ENCODE measurements at regions of chr18 and their contacts with region 1.

Region 1: GRCh38 chr18:9575558-9575957 is 38.8 kb downstream of the PPP4R1 start:
- DNase-seq: peak in 4 of 5 donors; percentile 80 to 88 (median 82)
- ATAC-seq: peak; percentile 96 to 99 (median 98)
- H3K4me3 ChIP-seq: peak overlapping the region in 1 of 12 donors; percentile 6
- H3K27ac ChIP-seq: peak overlapping the region in 7 of 12 donors; percentile 6 to 40 (median 23)
- H3K4me1 ChIP-seq: peaks cover 0 to 9% (median 4%) of the 10 kb centered on the region in 12 donors
- H3K27me3 ChIP-seq: no peaks in the 10 kb centered on the region
- CTCF ChIP-seq: peak; percentile 73 to 95 (median 86)
- POLR2A ChIP-seq: no peak

Region 2: DNA sequence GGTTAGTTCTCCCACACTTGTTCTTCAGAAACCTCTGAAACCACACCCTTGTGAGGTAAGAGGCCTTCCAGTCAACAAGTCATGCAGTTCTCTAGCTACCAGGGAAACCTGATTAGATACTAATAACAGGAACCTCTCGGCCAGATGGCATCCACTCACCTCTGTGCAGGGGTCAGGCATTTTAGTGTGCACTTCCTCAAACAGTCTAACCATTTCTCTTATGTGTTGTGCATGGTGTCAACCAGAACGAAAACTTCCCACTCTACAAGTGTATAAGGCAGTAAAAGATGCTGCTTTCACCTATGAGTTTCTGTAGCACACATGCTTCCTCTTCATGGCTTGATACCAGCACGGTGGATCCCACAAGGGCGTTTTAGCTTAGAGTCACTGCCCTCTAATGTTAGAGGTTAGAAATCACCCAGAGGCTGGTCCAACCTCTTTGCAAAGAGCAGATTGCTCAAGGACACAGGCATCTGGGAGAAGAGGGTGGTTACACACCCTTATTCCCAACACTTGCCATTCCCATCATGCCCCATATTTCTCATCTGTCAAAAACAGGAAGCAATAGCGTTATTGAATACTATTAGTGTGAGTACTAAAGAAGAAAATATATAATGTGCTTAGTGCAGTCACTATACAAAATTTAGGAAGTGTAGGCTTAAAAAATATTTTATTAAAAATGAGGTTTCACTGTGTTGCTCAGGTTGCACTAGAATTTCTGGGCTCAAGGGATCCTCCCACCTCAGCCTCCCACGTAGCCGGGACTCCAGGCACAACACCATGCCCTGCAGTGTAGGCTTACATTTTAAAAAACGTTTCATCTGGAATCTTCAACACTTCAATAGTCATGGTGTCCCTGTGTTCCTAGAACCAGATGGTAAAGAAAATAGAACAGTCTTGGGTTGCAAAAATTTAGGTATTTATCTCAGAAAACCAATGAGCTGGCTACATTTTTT is 98.0 kb after region 1 on chr18:
- intact Hi-C with region 1: loop called in 7 of 10 experiments (anchors 5 to 10 kb)
- DNase-seq: peak in 3 of 5 donors; percentile 34 to 44 (median 36)
- ATAC-seq: peak; percentile 81 to 96 (median 95)
- H3K4me3 ChIP-seq: no peak overlapping the region
- H3K27ac ChIP-seq: peak overlapping the region in 2 of 12 donors; percentile 25 to 36
- H3K4me1 ChIP-seq: peaks cover 0 to 9% (median 0%) of the 10 kb centered on the region in 12 donors
- H3K27me3 ChIP-seq: no peaks in the 10 kb centered on the region
- CTCF ChIP-seq: peak in 8 of 12 donors; percentile 8 to 48 (median 32)
- POLR2A ChIP-seq: peak in 1 of 2 donors; percentile 9

Region 3: DNA sequence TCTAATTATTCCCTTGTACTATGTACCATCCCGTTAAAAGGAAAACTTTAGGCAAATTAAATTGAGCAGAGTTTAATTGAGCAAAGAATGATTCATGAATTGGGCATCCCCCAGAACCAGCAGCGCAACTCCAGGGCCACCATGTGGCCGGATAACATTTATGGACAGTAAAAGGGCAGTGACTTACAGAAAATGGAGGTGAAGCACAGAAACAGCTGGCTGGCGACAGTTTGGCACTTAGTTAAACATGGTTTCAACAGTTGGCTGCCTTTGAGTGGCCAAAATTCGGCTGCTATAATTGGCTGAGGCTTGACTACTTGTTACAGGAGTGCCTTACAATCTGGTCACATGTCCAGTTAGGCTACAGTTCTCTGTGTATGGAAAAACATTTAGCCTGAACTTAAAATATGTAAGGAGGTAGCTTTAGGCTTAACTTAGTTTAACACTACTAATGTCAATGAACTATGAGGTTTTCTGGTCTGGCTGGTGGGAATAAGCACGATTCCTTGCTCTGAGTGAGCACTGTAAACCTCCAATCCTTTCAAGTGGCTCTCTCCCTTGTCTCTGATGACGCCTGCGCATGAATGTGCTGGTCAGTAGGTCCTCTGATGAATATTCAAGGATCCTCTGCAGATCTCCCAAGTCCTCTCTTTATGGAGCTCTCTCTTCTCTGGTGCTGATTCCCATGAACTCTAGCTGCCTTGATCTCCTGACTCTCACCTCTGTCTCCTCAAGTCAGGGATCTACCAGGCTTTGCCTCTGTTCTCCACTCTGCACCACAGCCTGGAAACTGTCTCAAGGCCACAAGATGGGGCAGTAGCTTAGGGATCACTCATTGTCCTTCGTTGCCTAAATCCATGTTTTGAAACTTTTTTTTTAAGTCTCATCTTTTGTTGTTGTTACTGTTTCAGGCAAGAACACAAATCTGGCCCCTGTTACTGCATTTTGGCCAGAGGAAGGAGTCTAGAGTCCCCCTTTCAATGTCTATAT is 108.1 kb after region 1 on chr18:
- intact Hi-C with region 1: loop called in 6 of 10 experiments (anchors 5 to 10 kb)
- DNase-seq: no peak
- ATAC-seq: peak; percentile 50 to 60 (median 54)
- H3K4me3 ChIP-seq: peak overlapping the region in 1 of 12 donors; percentile 13
- H3K27ac ChIP-seq: peak overlapping the region in 8 of 12 donors; percentile 52 to 79 (median 72)
- H3K4me1 ChIP-seq: peaks cover 0 to 26% (median 11%) of the 10 kb centered on the region in 12 donors
- H3K27me3 ChIP-seq: no peaks in the 10 kb centered on the region
- CTCF ChIP-seq: peak in 10 of 12 donors; percentile 12 to 59 (median 40)
- POLR2A ChIP-seq: no peak

Region 4: GRCh38 chr18:9771261-9771976 is 195.9 kb after region 1 on chr18:
- intact Hi-C with region 1: loop called (anchors 1 to 10 kb)
- DNase-seq: peak; percentile 84 to 92 (median 87)
- ATAC-seq: peak; percentile 87 to 98 (median 94)
- H3K4me3 ChIP-seq: peak overlapping the region in 2 of 12 donors; percentile 8 to 12
- H3K27ac ChIP-seq: peak overlapping the region in 7 of 12 donors; percentile 1 to 86 (median 14)
- H3K4me1 ChIP-seq: peaks cover 0 to 75% (median 9%) of the 10 kb centered on the region in 12 donors
- H3K27me3 ChIP-seq: no peaks in the 10 kb centered on the region
- CTCF ChIP-seq: peak; percentile 95 to 99 (median 98)
- POLR2A ChIP-seq: no peak

Region 5: DNA sequence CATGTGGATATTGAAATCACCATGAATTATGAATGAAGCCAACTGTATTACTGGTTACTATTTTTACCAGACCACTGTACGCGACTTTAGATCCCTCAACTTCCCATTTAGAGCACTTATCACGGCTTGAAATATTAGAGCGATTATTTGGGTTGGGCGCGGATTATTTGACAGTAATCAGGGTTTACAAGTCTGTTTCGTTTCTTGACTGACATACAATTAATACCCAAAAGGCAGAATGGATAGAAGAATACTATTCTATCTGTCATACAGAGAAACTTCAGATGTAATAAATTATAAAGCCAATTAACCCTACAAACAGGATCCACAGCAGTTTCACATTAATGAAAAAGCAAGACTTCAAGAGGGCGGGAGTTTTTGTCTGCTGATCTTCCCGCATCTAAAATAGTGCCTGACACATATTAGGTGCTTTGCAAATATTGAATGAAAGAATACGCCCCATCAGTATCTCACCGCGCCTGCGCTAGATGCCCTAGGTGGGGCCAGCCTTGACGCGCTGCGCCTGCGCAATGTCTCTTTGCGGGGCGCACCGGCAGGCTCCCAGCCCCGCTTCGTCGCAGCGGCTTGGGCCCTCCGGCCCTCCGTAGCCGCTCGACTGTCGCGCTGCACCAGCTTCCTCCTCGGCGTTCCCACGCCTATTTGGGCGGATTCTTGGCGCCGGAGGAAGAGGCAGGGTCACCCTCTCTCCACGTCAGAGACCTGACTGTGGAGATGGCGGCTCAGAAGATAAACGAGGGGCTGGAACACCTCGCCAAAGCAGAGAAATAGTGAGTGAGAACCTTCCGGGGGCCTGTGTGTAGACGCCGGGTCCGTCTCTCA is 950.0 kb after region 1 on chr18 and contains the start of gene NAPG:
- intact Hi-C with region 1: loop called in 4 of 10 experiments (anchors 10 kb)
- DNase-seq: peak; percentile 94 to 96 (median 96)
- ATAC-seq: peak; percentile 84 to 96 (median 94)
- H3K4me3 ChIP-seq: peak within 1 kb of the TSS; percentile 57 to 98 (median 79)
- H3K27ac ChIP-seq: peak within 1 kb of the TSS; percentile 88 to 99 (median 95)
- H3K4me1 ChIP-seq: peaks cover 0 to 47% (median 31%) of the 10 kb centered on the region in 12 donors
- H3K27me3 ChIP-seq: no peaks in the 10 kb centered on the region
- CTCF ChIP-seq: peak in 1 of 12 donors; percentile 16
- POLR2A ChIP-seq: peak in 1 of 2 donors; percentile 62
- total RNA-seq, gene NAPG: 26.7 to 46.3 (median 35.1) TPM